Activated CD8-positive, alpha-beta T cell treated with anti-CD3 and anti-CD28 coated beads for 36 hours (primary cell): ENCODE measurements at regions of chr14 and their contacts with region 1.

Region 1: GRCh38 chr14:24310646-24311604 is at the start of gene LTB4R:
- DNase-seq: peak; percentile 74
- ATAC-seq: peak; percentile 87
- H3K4me3 Mint-ChIP-seq: peak within 1 kb of the TSS; percentile 58
- H3K27ac Mint-ChIP-seq: peak within 1 kb of the TSS; percentile 81
- H3K4me1 Mint-ChIP-seq: peaks cover 66% of the 10 kb centered on the region
- H3K27me3 Mint-ChIP-seq: no peaks in the 10 kb centered on the region
- CTCF ChIP-seq: peak; percentile 63
- total RNA-seq, gene LTB4R: 11.6 to 11.7 TPM

Region 2: GRCh38 chr14:24215495-24216344 is 95.2 kb before region 1 on chr14 and contains the start of gene MDP1:
- CTCF ChIA-PET with region 1: interaction called, 24 read pairs
- POLR2A ChIA-PET with region 1: interaction called, 4 read pairs
- intact Hi-C with region 1: no loop called
- DNase-seq: peak; percentile 91
- ATAC-seq: peak; percentile 74
- H3K4me3 Mint-ChIP-seq: peak within 1 kb of the TSS; percentile 97
- H3K27ac Mint-ChIP-seq: peak within 1 kb of the TSS; percentile 98
- H3K4me1 Mint-ChIP-seq: peaks cover 40% of the 10 kb centered on the region
- H3K27me3 Mint-ChIP-seq: no peaks in the 10 kb centered on the region
- CTCF ChIP-seq: peak; percentile 45
- total RNA-seq, gene MDP1: 11.2 to 11.3 TPM

Region 3: DNA sequence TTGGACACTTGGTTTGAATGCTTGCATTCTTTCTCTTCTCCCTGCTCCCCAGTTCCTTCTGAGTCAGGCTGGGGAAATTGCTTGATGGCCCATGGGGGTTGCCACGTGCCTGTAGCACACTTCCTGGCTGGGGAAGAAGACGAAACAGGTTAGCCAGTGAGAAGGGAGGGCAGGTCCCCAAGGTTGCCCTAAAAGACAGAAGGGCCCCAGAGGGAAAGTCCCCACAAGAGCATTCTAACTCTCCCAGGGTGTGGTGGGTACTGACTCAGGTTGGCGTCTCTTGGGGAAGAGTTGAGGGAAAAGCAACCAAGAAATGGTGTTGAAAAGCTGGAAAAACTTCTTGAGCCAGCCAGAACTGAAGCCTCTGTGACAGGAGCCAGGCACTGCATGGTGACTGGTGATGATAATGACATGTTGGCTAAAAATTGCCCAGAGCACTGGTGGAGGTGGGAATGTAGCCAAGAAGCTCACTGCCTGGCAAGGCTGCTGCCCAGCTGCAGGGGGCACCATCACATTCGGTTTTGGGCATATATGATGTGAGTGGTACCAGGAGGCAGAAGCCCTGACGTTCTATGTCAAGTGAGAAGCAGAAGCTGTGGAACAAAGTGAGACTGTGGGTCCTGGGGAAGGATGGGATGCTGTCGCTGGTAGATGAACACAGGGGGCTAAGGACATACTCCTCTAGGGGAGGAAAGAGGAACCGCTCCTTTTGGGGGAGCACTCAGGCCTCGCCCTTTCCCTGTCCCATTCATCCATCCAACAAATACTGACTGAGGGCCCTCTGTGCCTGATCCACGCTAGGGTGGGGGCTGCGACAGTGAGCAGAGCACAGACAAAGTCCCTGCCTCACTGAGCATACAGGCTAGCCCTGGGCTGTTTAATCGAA is 31.4 kb before region 1 on chr14:
- CTCF ChIA-PET with region 1: interaction called, 54 read pairs
- POLR2A ChIA-PET with region 1: no interaction called
- intact Hi-C with region 1: no loop called
- DNase-seq: peak; percentile 76
- ATAC-seq: peak; percentile 88
- H3K4me3 Mint-ChIP-seq: no peak overlapping the region
- H3K27ac Mint-ChIP-seq: peak overlapping the region; percentile 77
- H3K4me1 Mint-ChIP-seq: peaks cover 44% of the 10 kb centered on the region
- H3K27me3 Mint-ChIP-seq: no peaks in the 10 kb centered on the region
- CTCF ChIP-seq: peak; percentile 53

Region 4: GRCh38 chr14:24299255-24300195 is 11.4 kb before region 1 on chr14 and contains the starts of genes DHRS1 and NOP9:
- CTCF ChIA-PET with region 1: interaction called, 106 read pairs
- POLR2A ChIA-PET with region 1: interaction called, 54 read pairs
- intact Hi-C with region 1: no loop called
- DNase-seq: peak; percentile 94
- ATAC-seq: peak; percentile 76
- H3K4me3 Mint-ChIP-seq: peak within 1 kb of the TSS; percentile 89
- H3K27ac Mint-ChIP-seq: peak within 1 kb of the TSS; percentile 88
- H3K4me1 Mint-ChIP-seq: peaks cover 40% of the 10 kb centered on the region
- H3K27me3 Mint-ChIP-seq: no peaks in the 10 kb centered on the region
- CTCF ChIP-seq: no peak
- total RNA-seq, gene DHRS1: 11.9 to 13.6 TPM
- total RNA-seq, gene NOP9: 33.5 to 33.6 TPM

Region 5: DNA sequence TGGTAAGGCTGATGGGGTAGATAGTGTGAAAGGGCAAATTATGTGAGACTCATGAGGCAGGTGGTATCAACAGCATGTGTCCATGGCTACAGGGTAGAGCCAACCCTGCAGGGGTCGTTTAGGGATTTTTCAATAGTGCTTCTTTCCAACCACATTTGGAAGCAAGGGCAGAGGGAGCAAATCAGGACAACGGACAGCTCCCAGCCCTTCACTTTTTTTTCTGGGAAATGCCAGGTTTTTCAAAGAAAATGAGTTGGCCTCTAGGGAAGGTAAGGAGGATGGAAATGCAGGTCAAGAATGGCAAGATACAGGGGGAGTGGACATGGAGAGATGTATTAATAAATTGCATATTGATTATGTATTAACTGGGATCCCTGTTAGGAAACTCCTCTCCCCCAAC is 202.1 kb after region 1 on chr14:
- CTCF ChIA-PET with region 1: no interaction called
- POLR2A ChIA-PET with region 1: no interaction called
- intact Hi-C with region 1: no loop called
- DNase-seq: peak; percentile 5
- ATAC-seq: no peak
- H3K4me3 Mint-ChIP-seq: no peak overlapping the region
- H3K27ac Mint-ChIP-seq: no peak overlapping the region
- H3K4me1 Mint-ChIP-seq: peaks cover 12% of the 10 kb centered on the region
- H3K27me3 Mint-ChIP-seq: peaks cover 10% of the 10 kb centered on the region
- CTCF ChIP-seq: no peak

Region 6: GRCh38 chr14:24695265-24696241 is 384.6 kb after region 1 on chr14:
- CTCF ChIA-PET with region 1: no interaction called
- POLR2A ChIA-PET with region 1: no interaction called
- intact Hi-C with region 1: no loop called
- DNase-seq: peak; percentile 33
- ATAC-seq: peak; percentile 14
- H3K4me3 Mint-ChIP-seq: no peak overlapping the region
- H3K27ac Mint-ChIP-seq: no peak overlapping the region
- H3K4me1 Mint-ChIP-seq: peaks cover 23% of the 10 kb centered on the region
- H3K27me3 Mint-ChIP-seq: no peaks in the 10 kb centered on the region
- CTCF ChIP-seq: no peak